Activated T-helper 1 cell treated with anti-CD3 and anti-CD28 coated beads, Interleukin-12 subunit alpha, Interleukin-12 subunit beta, Interleukin-2, Interleukin-4 antibody, amounts not matched to agents 30 ng/mL and 10 ng/mL and 1 ng/mL, durations not matched to agents 14 hours and 24 hours and 36 hours (primary cell): ENCODE measurements at regions of chrX and their contacts with region 1.

Region 1: GRCh38 chrX:65723706-65724105 is 56.3 kb downstream of the MSN start:
- DNase-seq: peak; percentile 34
- H3K4me3 Mint-ChIP-seq: peak overlapping the region; percentile 0
- H3K27ac Mint-ChIP-seq: peak overlapping the region; percentile 76
- H3K4me1 Mint-ChIP-seq: peaks cover 82% of the 10 kb centered on the region
- H3K27me3 Mint-ChIP-seq: no peaks in the 10 kb centered on the region

Region 2: GRCh38 chrX:65667503-65668376 is 56.0 kb before region 1 on chrX and contains the start of gene MSN:
- intact Hi-C with region 1: loop called (anchors 1 kb)
- DNase-seq: peak; percentile 74
- H3K4me3 Mint-ChIP-seq: peak within 1 kb of the TSS; percentile 98
- H3K27ac Mint-ChIP-seq: peak within 1 kb of the TSS; percentile 97
- H3K4me1 Mint-ChIP-seq: peaks cover 43% of the 10 kb centered on the region
- H3K27me3 Mint-ChIP-seq: no peaks in the 10 kb centered on the region
- total RNA-seq, gene MSN: 479 and 484 TPM in 2 replicates

Region 3: GRCh38 chrX:65677954-65678469 is 45.7 kb before region 1 on chrX:
- intact Hi-C with region 1: loop called (anchors 1 kb)
- DNase-seq: no peak
- H3K4me3 Mint-ChIP-seq: peak overlapping the region; percentile 45
- H3K27ac Mint-ChIP-seq: peak overlapping the region; percentile 78
- H3K4me1 Mint-ChIP-seq: peaks cover 89% of the 10 kb centered on the region
- H3K27me3 Mint-ChIP-seq: no peaks in the 10 kb centered on the region

Region 4: GRCh38 chrX:65697915-65698796 is 25.6 kb before region 1 on chrX:
- intact Hi-C with region 1: loop called (anchors 1 kb)
- DNase-seq: peak; percentile 65
- H3K4me3 Mint-ChIP-seq: peak overlapping the region; percentile 77
- H3K27ac Mint-ChIP-seq: peak overlapping the region; percentile 98
- H3K4me1 Mint-ChIP-seq: peaks cover 90% of the 10 kb centered on the region
- H3K27me3 Mint-ChIP-seq: no peaks in the 10 kb centered on the region

Region 5: DNA sequence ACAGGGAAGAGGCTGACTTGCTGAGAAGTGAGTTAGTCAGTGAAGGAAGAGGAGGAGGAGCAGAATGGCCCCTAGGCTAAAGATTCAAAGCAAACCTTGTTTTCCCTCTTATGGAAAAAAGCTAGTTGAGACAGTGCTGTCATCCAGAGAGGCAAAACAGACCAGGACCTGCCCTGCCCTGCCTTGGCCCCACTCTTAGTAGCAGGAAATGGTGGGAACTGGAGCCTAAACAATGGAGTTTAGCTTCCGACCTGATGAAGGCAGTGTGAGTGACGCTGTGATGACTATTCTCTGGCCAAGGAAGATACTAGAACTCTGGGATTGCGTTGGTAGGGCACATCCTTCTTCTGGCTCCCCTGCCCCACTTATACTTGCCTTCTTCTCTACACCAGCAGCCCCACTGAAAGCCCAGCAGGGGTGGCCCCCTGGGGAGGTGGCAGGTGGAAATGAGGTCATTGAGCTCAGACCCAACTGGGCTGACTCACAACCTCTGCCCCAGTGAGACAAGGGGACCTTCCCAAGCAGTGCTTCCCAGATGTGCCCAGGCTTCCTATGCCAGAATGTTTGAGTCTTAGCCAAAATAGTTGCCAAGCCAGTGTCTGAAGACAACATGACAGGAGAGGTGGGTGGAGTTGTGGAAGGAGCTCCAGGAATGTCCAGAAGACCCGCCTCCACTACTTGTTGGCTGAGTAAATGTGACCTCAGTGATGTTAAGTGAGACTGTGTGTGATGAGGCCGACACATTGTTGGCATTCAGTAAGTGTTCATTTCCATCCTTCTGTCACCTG is 17.5 kb before region 1 on chrX:
- intact Hi-C with region 1: loop called (anchors 1 kb)
- DNase-seq: no peak
- H3K4me3 Mint-ChIP-seq: peak overlapping the region; percentile 66
- H3K27ac Mint-ChIP-seq: peak overlapping the region; percentile 88
- H3K4me1 Mint-ChIP-seq: peaks cover 63% of the 10 kb centered on the region
- H3K27me3 Mint-ChIP-seq: no peaks in the 10 kb centered on the region

Region 6: GRCh38 chrX:65741823-65742222 is 18.1 kb after region 1 on chrX:
- intact Hi-C with region 1: loop called (anchors 2 kb)
- DNase-seq: no peak
- H3K4me3 Mint-ChIP-seq: peak overlapping the region; percentile 45
- H3K27ac Mint-ChIP-seq: peak overlapping the region; percentile 84
- H3K4me1 Mint-ChIP-seq: peaks cover 42% of the 10 kb centered on the region
- H3K27me3 Mint-ChIP-seq: no peaks in the 10 kb centered on the region

Region 7: DNA sequence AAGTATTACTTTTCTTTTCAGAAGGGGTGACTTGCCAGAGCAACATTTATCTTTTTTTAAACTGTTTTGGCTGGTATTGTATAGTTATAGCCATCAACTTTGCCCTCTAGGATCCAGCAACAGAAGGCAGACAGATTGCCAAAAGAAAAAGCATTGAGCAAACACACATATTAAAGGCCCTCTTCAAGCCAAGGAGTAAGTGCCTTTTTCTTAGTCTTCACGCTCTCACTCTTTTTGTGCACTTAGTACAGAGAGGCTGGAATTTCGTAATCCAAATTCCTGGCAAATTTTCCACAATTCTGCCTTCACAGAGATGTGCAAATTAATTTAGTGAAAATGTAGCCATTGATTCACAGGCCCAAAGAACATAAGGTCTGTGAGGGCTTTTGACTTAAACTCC is 1168.3 kb after region 1 on chrX:
- intact Hi-C with region 1: no loop called
- DNase-seq: no peak
- H3K4me3 Mint-ChIP-seq: no peak overlapping the region
- H3K27ac Mint-ChIP-seq: no peak overlapping the region
- H3K4me1 Mint-ChIP-seq: no peaks in the 10 kb centered on the region
- H3K27me3 Mint-ChIP-seq: no peaks in the 10 kb centered on the region